BJ (cell line): ENCODE measurements at regions of chr3 and their contacts with region 1.

Region 1: GRCh38 chr3:114408736-114409670 is 115.2 kb downstream of the TIGIT start:
- DNase-seq: no peak
- H3K4me3 ChIP-seq: no peak overlapping the region
- H3K27me3 ChIP-seq: no peaks in the 10 kb centered on the region
- CTCF ChIP-seq: no peak

Region 2: DNA sequence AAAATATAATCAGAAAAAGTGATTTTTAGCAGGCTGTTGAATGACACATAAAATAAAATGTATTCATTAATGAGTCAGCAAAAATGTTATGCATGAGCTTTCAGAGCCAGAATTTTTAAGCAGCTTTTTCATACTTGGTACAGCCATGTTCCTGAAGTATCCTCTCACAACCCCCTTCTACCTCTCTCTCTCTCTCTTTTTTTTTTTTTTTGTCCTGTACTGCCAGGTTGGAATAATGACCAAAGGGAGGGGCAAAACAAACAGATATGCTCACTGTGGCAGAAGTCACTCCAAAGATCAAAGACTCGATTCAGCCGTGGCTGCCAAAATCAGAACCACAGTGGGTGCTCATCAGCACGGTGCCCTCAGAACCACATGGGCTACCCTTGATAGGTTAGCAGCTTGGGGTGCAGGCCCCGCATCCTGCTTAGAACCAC is 355.1 kb after region 1 on chr3:
- CTCF ChIA-PET with region 1: no interaction called
- POLR2A ChIA-PET with region 1: interaction called, 10 read pairs
- DNase-seq: no peak
- H3K4me3 ChIP-seq: no peak overlapping the region
- H3K27me3 ChIP-seq: no peaks in the 10 kb centered on the region
- CTCF ChIP-seq: no peak